Activated B cell treated with CpG ODN at 0.5 μM for 24 hours (primary cell): ENCODE measurements at regions of chr11 and their contacts with region 1.

Region 1: DNA sequence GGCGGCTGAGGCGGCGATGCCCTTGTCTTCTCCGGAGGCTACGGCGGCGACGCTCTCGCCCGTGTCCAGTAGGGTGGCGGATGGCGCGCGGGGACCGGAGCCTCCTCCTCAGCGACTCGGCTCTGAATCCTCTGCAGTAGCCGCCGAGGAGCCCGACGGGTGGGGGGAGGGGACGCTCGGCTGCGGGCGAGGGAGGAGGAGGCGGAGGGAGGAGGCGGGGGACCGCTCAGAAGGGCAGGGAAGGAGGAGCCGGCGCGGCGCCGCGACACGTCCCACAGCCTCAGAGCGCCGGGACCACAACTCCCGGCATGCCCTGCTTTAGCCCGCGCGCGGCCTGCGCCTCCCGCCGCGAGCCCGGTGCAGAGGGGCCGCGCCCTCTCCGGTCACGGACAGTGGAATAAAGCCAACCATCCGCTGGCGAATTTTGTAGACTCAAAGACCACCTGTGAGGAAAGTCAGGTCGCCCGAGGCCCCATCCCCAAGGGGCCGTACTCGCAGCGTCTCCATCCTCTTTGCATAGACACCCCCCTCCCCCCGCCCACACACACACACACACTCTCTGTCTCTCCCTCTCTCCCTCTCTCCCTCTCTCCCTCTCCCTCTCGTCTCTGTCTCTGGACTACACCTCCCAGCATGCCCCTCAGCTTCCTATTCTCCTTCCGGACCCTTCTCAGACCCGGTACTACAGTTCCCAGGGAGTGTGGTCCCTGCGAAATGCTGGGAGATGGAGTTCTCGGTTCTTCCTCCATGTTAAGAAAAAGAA is at the start of gene FAM168A:
- DNase-seq: peak; percentile 81
- ATAC-seq: peak; percentile 93
- H3K4me3 Mint-ChIP-seq: peak within 1 kb of the TSS; percentile 92
- H3K27ac Mint-ChIP-seq: peak within 1 kb of the TSS; percentile 88
- H3K4me1 Mint-ChIP-seq: peaks cover 26% of the 10 kb centered on the region
- H3K27me3 Mint-ChIP-seq: no peaks in the 10 kb centered on the region
- CTCF ChIP-seq: no peak
- total RNA-seq, gene FAM168A: 14.1 and 16.5 TPM in 2 replicates

Region 2: DNA sequence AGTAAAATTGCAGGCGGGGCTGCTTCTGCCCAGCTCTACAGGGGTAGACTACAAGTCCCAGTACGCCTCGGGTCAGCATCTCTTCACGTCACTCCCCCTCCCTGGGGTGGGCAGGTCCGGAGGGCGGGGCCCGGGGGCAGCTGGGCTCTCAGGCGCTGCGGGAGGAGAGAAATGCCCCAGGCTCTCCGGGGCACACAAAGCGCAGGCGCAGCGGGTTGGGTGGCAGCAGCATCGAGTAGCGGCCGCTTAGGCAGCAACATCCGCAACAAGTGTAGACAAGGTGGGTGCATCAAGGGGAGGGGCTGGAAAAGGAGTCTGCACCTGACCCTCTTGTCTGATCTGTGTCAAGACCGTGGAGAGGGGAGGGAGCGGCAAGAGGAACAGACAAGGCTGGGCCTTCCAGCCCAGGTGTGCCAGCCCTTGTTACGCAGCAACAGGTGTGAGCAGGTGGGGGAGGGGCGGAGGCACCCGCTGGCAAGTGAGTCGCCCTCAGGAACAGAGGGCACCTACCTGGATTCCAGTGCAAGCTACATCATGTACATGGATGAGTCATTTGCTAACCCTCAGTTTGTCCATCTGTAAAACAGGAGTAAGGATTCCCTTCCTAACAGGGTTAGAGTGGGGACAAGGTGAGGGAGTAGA is 49.4 kb after region 1 on chr11:
- CTCF ChIA-PET with region 1: no interaction called
- POLR2A ChIA-PET with region 1: interaction called, 12 read pairs
- intact Hi-C with region 1: loop called (anchors 1 kb)
- DNase-seq: peak; percentile 84
- ATAC-seq: peak; percentile 100
- H3K4me3 Mint-ChIP-seq: peak overlapping the region; percentile 83
- H3K27ac Mint-ChIP-seq: peak overlapping the region; percentile 83
- H3K4me1 Mint-ChIP-seq: peaks cover 21% of the 10 kb centered on the region
- H3K27me3 Mint-ChIP-seq: no peaks in the 10 kb centered on the region
- CTCF ChIP-seq: no peak

Region 3: DNA sequence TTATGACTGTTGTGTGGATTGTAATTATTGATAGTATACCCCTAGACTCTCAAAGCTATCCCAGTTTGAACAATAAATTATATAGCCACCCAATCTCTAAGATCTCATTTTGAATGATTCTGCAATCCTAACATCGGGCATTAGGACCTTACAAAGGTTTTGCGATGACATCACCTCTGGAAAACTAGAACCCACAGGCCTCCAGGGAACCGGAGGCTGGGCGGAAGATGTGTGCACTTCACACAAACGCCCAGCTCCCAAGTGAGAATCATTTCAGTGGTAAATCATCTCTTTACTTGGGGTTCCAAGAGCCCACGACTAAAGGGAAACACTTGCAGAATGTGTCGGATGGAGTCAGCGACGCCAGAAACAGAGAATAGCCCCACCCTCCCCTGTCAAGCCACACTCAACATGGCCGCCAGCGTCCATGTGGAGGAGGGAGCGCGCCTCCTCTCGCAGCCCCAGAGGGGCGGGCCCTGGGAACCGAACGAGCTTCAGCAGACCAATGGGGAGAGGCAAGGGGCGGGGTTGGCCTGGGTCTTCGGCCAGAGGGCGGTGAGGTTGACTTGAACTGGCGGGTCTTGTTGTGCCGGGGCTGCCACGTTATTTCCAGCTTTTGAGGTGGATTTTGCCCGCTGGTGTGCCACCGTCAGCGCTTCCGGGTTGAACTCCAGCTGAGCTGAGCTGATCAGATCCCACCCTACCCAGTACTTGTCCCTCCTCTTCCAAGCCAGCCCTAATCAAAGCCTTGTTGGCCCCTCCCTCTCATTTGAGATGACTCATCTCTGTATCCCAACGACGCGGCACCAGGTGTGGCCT is 181.2 kb after region 1 on chr11:
- CTCF ChIA-PET with region 1: no interaction called
- POLR2A ChIA-PET with region 1: interaction called, 3 read pairs
- intact Hi-C with region 1: loop called (anchors 1 kb)
- DNase-seq: peak; percentile 94
- ATAC-seq: peak; percentile 99
- H3K4me3 Mint-ChIP-seq: peak overlapping the region; percentile 94
- H3K27ac Mint-ChIP-seq: peak overlapping the region; percentile 98
- H3K4me1 Mint-ChIP-seq: peaks cover 8% of the 10 kb centered on the region
- H3K27me3 Mint-ChIP-seq: peaks cover 2% of the 10 kb centered on the region
- CTCF ChIP-seq: no peak

Region 4: GRCh38 chr11:73787643-73788537 is 189.8 kb after region 1 on chr11 and contains the start of gene MRPL48:
- CTCF ChIA-PET with region 1: no interaction called
- POLR2A ChIA-PET with region 1: interaction called, 5 read pairs
- intact Hi-C with region 1: loop called (anchors 1 kb)
- DNase-seq: peak; percentile 84
- ATAC-seq: peak; percentile 100
- H3K4me3 Mint-ChIP-seq: peak within 1 kb of the TSS; percentile 100
- H3K27ac Mint-ChIP-seq: peak within 1 kb of the TSS; percentile 100
- H3K4me1 Mint-ChIP-seq: peaks cover 15% of the 10 kb centered on the region
- H3K27me3 Mint-ChIP-seq: no peaks in the 10 kb centered on the region
- CTCF ChIP-seq: no peak
- total RNA-seq, gene MRPL48: 38.3 and 40.6 TPM in 2 replicates